ENCODE measurements at regions of chr2 and their contacts with region 1.

Region 1: GRCh38 chr2:61538200-61538919 is at the start of gene XPO1:
- DNase-seq: peak; percentile 99
- H3K4me3 ChIP-seq: peak within 1 kb of the TSS; percentile 88 to 99 (median 90)
- H3K27ac ChIP-seq: peak within 1 kb of the TSS; percentile 81
- H3K4me1 ChIP-seq: peaks cover 29% of the 10 kb centered on the region
- H3K27me3 ChIP-seq: no peaks in the 10 kb centered on the region
- CTCF ChIP-seq: no peak
- POLR2A ChIP-seq: peak; percentile 96
- total RNA-seq, gene XPO1: 148 and 166 TPM in 2 replicates

Region 2: GRCh38 chr2:59858540-59858939 is 1679.8 kb before region 1 on chr2:
- CTCF ChIA-PET with region 1: no interaction called
- POLR2A ChIA-PET with region 1: no interaction called
- dilution Hi-C with region 1: no loop called
- intact Hi-C with region 1: no loop called
- DNase-seq: no peak
- H3K4me3 ChIP-seq: no peak overlapping the region
- H3K27ac ChIP-seq: no peak overlapping the region
- H3K4me1 ChIP-seq: no peaks in the 10 kb centered on the region
- H3K27me3 ChIP-seq: no peaks in the 10 kb centered on the region
- CTCF ChIP-seq: no peak
- POLR2A ChIP-seq: no peak

Region 3: DNA sequence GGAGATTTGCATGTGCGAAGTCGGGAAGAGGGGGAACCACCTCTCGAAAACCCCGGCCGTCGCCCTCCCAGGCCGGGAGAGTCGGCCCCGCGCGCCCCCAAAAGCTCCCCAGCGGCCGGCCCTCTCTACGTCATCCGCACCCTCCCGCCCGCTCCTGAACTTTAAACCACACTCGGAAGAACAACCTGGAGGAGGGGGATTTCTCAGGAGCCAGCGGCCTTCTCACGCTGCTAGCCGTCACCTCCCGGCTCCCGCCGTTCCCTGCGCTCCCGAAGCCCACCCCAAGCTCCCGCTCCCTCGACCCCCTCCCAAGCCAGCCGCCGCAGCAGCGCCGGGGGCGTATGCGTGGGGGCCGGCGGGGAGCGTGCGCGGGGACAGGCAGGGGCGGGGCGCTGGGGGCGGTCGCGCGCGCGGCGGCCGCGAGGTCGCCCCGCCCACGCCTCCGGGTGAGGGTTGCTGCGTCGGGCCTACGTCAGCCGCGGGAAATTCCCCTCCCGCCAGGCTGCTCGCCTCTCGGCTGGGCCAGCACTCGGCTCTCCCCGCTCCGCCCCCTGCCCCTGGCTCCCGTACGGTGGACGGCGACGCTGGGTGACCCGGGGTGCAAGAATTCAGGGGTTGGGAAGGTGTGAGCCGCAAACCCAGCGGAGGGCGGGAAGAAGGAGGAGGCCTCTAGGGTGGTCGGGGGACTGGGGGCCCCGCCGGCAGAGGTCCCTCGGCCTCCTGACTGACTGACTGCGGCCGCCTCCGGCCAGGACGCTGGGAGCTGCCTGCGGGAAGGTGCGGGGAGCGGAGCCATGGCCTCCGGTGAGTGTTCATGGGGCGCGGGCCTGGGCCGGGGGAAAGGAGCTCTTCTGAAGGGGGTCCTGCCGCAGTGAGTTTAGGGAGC is 657.1 kb before region 1 on chr2 and contains the start of gene REL:
- CTCF ChIA-PET with region 1: no interaction called
- POLR2A ChIA-PET with region 1: no interaction called
- dilution Hi-C with region 1: no loop called
- intact Hi-C with region 1: loop called (anchors 5 kb)
- DNase-seq: peak; percentile 90
- H3K4me3 ChIP-seq: peak within 1 kb of the TSS; percentile 94 to 99 (median 98)
- H3K27ac ChIP-seq: peak within 1 kb of the TSS; percentile 94
- H3K4me1 ChIP-seq: peaks cover 33% of the 10 kb centered on the region
- H3K27me3 ChIP-seq: no peaks in the 10 kb centered on the region
- CTCF ChIP-seq: peak in 1 of 2 donors; percentile 5
- POLR2A ChIP-seq: no peak
- total RNA-seq, gene REL: 11.7 and 12.8 TPM in 2 replicates

Region 4: GRCh38 chr2:61176755-61177726 is 361.3 kb before region 1 on chr2:
- CTCF ChIA-PET with region 1: no interaction called
- POLR2A ChIA-PET with region 1: no interaction called
- dilution Hi-C with region 1: no loop called
- intact Hi-C with region 1: loop called (anchors 2 kb)
- DNase-seq: peak; percentile 94
- H3K4me3 ChIP-seq: peak overlapping the region; percentile 42 to 82 (median 61)
- H3K27ac ChIP-seq: peak overlapping the region; percentile 71
- H3K4me1 ChIP-seq: peaks cover 32% of the 10 kb centered on the region
- H3K27me3 ChIP-seq: peaks cover 0 to 2% of the 10 kb centered on the region in 2 experiments
- CTCF ChIP-seq: peak in 1 of 2 donors; percentile 7
- POLR2A ChIP-seq: peak; percentile 95

Region 5: GRCh38 chr2:61585383-61585782 is 47.0 kb after region 1 on chr2:
- CTCF ChIA-PET with region 1: interaction called, 3 read pairs
- POLR2A ChIA-PET with region 1: no interaction called
- dilution Hi-C with region 1: no loop called
- intact Hi-C with region 1: loop called (anchors 5 kb)
- DNase-seq: peak; percentile 80
- H3K4me3 ChIP-seq: no peak overlapping the region
- H3K27ac ChIP-seq: no peak overlapping the region
- H3K4me1 ChIP-seq: no peaks in the 10 kb centered on the region
- H3K27me3 ChIP-seq: no peaks in the 10 kb centered on the region
- CTCF ChIP-seq: no peak
- POLR2A ChIP-seq: no peak

Region 6: DNA sequence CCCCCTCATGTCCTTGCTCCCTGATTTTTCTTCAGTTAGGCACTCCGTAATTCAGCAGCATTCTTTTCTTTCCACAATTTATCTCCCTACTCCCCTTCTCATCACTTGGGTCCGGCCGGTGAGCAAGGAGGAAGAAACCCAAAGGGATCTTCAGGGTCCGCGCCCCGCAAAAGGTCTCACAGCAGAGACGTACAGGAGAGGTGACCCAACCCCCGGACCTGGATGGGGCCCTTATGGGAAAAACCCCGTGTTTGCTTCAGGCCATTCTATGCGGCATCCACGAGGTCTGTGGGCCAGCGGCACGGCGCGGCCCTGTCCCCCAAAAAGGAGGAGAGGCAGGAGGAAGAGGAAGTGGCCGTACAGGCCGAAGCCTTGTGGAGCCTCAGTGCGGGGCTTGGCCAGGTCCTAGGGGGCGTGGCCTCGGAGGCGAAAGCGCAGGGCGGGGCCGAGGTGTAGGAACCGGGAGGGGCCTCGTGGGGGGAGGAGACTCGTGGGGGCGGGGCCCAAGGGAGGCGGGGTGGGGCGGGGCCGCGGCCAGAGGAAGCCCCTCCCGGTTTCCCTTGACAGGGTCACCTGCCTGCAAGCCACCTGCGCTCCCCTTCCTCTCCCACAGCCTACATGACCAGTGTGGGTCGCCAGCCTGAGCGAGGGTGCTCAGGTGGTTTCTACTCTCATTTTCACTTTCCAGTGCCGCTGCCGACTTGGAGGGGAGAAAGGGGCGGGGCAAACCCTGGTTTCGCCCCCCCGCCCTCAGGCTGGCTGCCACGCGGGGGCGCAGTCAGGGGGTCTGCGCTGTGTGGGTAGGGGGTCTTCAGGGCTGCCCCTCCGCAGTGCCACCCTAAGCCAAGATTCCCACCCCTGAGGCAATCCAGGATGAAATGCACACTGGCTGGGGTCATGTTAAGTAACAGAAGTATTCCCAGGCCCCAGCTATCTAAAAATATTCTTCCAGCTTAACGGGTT is 156.2 kb after region 1 on chr2:
- CTCF ChIA-PET with region 1: no interaction called
- POLR2A ChIA-PET with region 1: no interaction called
- dilution Hi-C with region 1: no loop called
- intact Hi-C with region 1: loop called (anchors 1 kb)
- DNase-seq: peak; percentile 80
- H3K4me3 ChIP-seq: peak overlapping the region; percentile 88 to 90 (median 89)
- H3K27ac ChIP-seq: peak overlapping the region; percentile 10
- H3K4me1 ChIP-seq: peaks cover 4% of the 10 kb centered on the region
- H3K27me3 ChIP-seq: no peaks in the 10 kb centered on the region
- CTCF ChIP-seq: peak; percentile 54 to 74
- POLR2A ChIP-seq: peak; percentile 66

Region 7: DNA sequence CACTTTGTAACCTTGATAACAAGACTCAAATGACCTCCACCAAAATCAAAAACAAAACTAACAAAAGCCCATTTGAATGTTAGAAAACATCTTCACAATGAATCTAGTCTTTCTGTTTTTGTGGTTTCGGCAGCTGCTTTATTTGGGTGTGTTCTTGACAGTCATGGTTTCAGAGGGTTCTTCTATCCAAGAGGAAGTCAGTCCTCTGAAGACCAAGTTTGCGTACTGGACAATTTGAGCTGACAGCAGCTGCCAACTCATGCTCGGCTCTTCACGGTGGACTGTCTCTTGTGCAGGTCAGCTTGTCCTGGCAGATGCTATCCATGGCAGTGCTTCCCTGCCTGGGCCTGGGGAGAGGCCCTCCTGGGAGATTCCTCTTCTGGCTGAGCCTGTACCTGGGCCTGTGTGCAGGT is 876.7 kb after region 1 on chr2:
- CTCF ChIA-PET with region 1: no interaction called
- POLR2A ChIA-PET with region 1: no interaction called
- dilution Hi-C with region 1: no loop called
- intact Hi-C with region 1: loop called (anchors 10 kb)
- DNase-seq: no peak
- H3K4me3 ChIP-seq: no peak overlapping the region
- H3K27ac ChIP-seq: no peak overlapping the region
- H3K4me1 ChIP-seq: peaks cover 6% of the 10 kb centered on the region
- H3K27me3 ChIP-seq: no peaks in the 10 kb centered on the region
- CTCF ChIP-seq: no peak
- POLR2A ChIP-seq: no peak